Mammary epithelial cell (primary cell): ENCODE measurements at regions of chr11 and their contacts with region 1.

Region 1: DNA sequence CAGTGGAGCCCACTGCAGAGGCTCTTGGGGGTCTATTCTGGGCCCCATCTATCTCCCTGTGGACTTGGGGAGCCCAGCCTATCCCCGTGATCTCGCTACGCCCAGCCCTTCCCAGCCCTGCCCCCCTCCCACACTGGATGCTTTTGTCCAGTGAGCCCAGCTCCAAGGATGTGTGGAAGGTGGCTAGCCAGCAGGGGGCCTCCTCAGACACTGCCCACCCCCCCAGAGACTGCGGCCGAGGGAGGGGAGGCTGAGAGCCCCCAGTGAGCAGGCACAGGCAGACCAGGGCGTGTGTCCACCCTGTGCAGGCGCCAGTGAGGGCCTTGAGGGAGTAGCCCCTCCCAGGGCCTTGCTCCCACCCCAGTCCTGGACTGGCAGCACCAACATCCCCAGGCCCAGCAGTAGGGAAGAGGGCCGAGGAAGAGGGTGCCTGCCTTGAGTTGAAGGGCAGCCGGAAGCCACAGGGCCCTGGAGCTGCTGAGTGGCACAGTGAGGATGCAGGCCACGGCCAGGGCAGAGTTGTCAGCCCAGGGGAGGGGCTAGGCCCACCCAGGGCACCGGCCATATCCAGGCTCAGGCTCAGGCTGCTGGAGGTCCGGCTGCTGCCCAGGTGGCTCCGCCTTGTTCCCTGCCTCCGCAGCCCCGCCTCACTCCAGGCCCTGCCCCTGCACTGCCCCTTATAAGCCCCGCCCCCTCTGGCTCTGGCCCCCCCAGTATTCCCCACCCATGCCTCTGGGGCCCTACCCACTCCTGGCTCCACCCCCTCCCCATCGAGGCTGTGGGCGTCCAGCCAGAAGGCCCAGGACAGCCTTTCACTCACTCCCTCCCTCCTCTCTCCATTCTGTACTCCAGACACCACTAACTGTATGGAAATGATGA is 28.0 kb downstream of the MOB2 start:
- DNase-seq: no peak
- H3K4me3 ChIP-seq: no peak overlapping the region
- H3K27ac ChIP-seq: no peak overlapping the region
- H3K4me1 ChIP-seq: no peaks in the 10 kb centered on the region
- H3K27me3 ChIP-seq: no peaks in the 10 kb centered on the region
- CTCF ChIP-seq: peak in 1 of 2 donors; percentile 30

Region 2: GRCh38 chr11:1532014-1532586 is 73.5 kb after region 1 on chr11:
- CTCF ChIA-PET with region 1: no interaction called
- dilution Hi-C with region 1: no loop called
- in situ Hi-C with region 1: no loop called
- intact Hi-C with region 1: loop called (anchors 5 kb)
- DNase-seq: peak; percentile 79
- H3K4me3 ChIP-seq: no peak overlapping the region
- H3K27ac ChIP-seq: peak overlapping the region; percentile 68
- H3K4me1 ChIP-seq: peaks cover 57% of the 10 kb centered on the region
- H3K27me3 ChIP-seq: no peaks in the 10 kb centered on the region
- CTCF ChIP-seq: peak in 1 of 2 donors; percentile 32